ENCODE measurements at regions of chr16 and their contacts with region 1.

Region 1: DNA sequence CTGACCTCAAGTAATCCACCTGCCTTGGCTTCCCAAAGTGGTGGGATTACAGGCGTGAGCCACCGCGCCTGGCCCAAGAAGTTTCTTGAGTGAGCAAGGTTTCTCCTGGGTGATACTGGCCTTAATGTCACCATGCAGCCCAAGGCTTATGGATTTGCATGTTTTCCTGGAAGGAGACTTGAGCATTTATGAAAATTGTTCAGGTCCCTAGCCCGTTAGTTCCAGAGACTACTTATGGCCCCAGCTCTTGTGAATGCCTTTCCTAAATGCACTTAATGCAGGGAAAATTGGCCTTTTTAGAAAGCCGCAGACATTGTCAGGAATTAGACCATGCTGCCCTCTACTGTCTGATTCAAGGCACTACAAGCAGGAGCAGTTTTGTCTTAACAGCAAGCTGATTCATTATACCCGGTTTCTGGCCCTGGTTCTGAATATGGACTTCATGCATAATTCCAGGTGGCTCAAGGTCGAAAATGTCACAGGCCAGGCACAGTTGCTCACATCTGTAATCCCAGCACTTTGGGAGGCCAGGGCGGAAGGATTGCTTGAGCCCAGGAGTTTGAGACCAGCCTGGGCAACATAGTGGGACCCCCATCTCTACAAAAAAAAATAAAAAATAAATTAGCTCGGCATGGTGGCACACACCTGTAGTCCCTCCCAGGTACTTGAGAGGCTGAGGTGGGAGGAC is 91.3 kb downstream of the SNX29 start:
- DNase-seq: peak in 39 of 42 donors; percentile 36 to 90 (median 73)

Region 2: GRCh38 chr16:11892761-11893160 is 175.1 kb before region 1 on chr16:
- intact Hi-C with region 1: no loop called
- DNase-seq: no peak

Region 3: GRCh38 chr16:11949527-11949926 is 118.3 kb before region 1 on chr16:
- intact Hi-C with region 1: loop called (anchors 5 kb)
- DNase-seq: peak in 35 of 42 donors; percentile 10 to 83 (median 58)

Region 4: GRCh38 chr16:11977376-11978041 is 90.3 kb before region 1 on chr16:
- intact Hi-C with region 1: loop called (anchors 10 kb)
- DNase-seq: peak in 1 of 42 donors; percentile 6

Region 5: DNA sequence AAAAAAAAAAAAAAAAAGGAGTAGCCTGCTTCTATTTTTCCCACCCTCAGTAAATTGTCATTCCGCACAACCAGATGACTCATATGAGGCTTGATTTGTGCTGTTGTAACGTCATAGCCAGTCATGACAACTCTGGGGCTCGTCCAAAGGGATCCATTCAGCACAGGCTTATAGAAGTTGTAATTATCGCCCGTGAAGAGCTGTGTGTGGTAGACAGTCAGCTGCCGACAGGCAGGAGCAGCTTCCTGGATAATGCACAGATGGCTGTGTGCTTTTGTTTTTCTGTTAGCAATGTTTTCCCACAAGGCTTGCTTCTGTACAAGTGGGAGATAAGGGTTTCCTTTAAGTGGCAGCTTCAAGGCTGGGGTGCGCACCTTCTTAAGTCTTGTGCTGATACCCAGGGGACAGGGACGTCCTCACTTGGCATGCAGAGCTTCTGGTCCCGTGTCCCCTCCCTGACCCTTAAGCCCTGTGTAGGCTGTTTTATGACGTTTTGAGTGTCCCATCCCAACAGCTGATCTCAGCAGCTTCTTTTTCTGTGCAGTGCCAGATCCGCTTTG is 65.3 kb before region 1 on chr16:
- intact Hi-C with region 1: no loop called
- DNase-seq: peak in 1 of 42 donors; percentile 16

Region 6: DNA sequence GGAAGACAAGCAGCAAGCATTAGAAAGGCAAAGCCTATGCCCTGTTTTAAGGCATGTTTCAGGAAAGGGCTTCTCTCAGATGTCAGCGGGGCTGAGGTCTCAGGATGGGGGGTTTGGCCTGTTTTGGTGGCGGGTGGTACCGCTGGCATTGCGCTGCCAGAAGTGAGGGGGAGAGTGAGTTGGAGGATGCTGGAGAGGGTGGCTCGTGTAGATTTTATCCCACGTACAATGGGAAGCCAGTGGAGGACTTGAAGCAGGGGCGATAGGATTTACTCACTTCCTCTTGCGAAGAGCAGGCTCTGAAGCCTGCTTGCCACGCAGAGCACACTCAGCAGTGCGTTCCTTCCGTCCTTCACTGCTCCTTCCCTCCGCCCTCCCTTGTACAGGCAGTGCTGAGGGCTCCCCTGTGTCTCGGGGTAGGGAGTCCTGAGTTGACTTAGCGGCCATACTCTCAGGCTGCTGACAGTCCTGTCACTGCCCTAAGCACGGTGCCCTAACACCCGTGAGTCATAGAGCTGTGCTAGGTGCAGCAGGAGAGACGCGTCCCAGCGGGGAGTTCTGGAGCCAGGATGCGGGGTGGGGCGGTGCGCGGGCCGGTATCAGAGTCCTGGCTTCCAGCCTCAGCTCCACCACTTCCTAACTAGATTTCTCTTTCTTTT is 21.8 kb after region 1 on chr16:
- intact Hi-C with region 1: no loop called
- DNase-seq: peak in 20 of 42 donors; percentile 13 to 64 (median 36)

Region 7: DNA sequence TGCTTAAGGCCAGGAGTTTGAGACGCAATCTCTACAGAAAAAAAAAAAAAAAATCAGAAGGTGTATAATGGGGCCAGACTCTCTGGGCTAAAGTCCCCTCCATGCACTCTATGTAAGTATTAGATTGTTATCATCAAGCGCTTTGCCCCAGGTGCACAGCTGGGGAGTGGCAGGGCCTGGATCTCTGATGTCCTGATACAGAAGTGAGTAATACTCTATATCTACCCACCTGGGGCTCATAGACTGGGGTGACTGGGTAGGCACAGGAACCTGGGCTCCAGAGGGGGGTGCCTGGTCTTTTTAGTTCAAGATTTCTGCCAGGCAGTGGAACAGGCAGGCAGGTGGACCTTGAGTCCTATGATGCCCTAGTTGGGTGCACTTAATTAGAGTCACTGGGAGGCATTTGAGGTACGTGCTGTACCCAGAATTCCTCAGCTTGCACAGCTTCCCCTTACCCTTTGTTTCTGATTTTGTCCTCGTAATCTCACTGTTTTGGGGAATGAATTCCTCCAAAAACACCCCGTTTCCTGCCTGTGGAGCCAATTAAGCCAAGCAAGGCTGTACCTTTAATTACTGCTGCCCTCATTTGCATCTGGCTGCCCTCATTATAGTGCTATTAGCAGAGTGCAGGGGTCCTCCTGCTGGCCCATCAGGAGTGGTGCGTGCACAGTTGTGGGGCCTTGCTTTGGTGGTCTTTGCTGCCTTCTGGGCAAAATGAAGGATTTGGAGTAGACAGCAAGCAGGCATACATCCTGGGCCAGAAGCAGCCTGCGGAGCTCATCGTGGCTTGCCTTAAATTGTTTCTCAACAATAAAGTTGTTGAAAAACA is 147.6 kb after region 1 on chr16:
- intact Hi-C with region 1: no loop called
- DNase-seq: no peak

Measured in head of caudate nucleus (tissue), 42 donors.